Heart left ventricle (tissue), 16 donors: ENCODE measurements at regions of chr17 and their contacts with region 1.

Region 1: DNA sequence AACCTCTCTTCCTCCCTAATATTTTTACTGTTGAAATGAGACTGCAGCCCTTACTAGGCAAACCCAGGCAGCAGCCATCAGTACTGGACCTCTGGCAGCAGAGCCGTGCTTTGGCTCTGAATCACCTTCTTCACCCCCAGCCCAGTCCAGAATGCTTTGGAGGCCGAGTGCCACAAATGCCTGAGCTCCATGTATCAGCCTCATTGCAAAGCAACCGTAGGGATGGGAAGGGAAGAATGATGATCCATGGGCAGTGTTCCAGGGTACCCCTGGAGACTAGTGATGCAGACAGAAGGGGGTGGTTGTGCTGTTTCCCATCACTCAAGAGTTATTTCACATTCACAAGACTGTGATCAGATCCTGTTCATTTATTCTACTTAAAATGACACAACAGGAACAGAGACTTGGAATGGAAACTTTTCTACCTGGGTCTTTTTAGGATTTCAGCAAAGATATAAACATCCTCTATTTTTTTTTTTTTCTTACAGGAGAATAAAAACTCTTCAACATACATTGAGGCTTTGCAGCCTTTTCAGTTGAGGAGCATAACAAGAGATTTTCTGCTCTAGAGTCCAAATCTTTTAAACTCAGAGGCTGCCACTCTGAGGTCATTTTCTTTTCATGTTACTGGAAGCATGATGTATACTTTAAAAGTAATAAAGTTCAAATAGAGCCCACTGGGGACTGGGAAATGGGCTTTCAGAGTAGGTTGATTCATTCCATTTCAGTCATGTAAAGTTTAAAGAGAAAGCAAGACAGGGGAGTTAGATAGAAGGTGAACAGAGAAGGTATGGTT is 138.3 kb downstream of the KCNJ2 start:
- DNase-seq: peak; percentile 16 to 54 (median 50)
- ATAC-seq: peak; percentile 45 to 74 (median 59)
- H3K4me3 ChIP-seq: no peak overlapping the region
- H3K27ac ChIP-seq: peak overlapping the region in 2 of 12 donors; percentile 20 to 36
- H3K4me1 ChIP-seq: peaks cover 0 to 33% (median 5%) of the 10 kb centered on the region in 12 donors
- H3K27me3 ChIP-seq: no peaks in the 10 kb centered on the region
- CTCF ChIP-seq: no peak
- POLR2A ChIP-seq: no peak

Region 2: GRCh38 chr17:70168977-70169708 is 138.5 kb before region 1 on chr17 and contains the start of gene KCNJ2:
- intact Hi-C with region 1: loop called in 6 of 10 experiments (anchors 5 to 10 kb)
- DNase-seq: peak; percentile 92 to 94 (median 94)
- ATAC-seq: peak; percentile 83 to 97 (median 91)
- H3K4me3 ChIP-seq: peak within 1 kb of the TSS; percentile 62 to 87 (median 77)
- H3K27ac ChIP-seq: peak within 1 kb of the TSS; percentile 87 to 98 (median 94)
- H3K4me1 ChIP-seq: peaks cover 0 to 38% (median 4%) of the 10 kb centered on the region in 12 donors
- H3K27me3 ChIP-seq: no peaks in the 10 kb centered on the region
- CTCF ChIP-seq: peak in 1 of 12 donors; percentile 3
- POLR2A ChIP-seq: peak; percentile 61 to 99
- total RNA-seq, gene KCNJ2: 28.8 to 60.7 (median 48.8) TPM

Region 3: GRCh38 chr17:70375406-70375805 is 67.8 kb after region 1 on chr17:
- intact Hi-C with region 1: no loop called
- DNase-seq: no peak
- ATAC-seq: no peak
- H3K4me3 ChIP-seq: no peak overlapping the region
- H3K27ac ChIP-seq: no peak overlapping the region
- H3K4me1 ChIP-seq: no peaks in the 10 kb centered on the region
- H3K27me3 ChIP-seq: no peaks in the 10 kb centered on the region
- CTCF ChIP-seq: no peak
- POLR2A ChIP-seq: no peak

Region 4: GRCh38 chr17:70499067-70499786 is 191.6 kb after region 1 on chr17:
- intact Hi-C with region 1: no loop called
- DNase-seq: no peak
- ATAC-seq: peak in 2 of 4 donors; percentile 46 to 55
- H3K4me3 ChIP-seq: no peak overlapping the region
- H3K27ac ChIP-seq: peak overlapping the region in 3 of 12 donors; percentile 11 to 69 (median 35)
- H3K4me1 ChIP-seq: peaks cover 0 to 27% (median 2%) of the 10 kb centered on the region in 12 donors
- H3K27me3 ChIP-seq: no peaks in the 10 kb centered on the region
- CTCF ChIP-seq: no peak
- POLR2A ChIP-seq: no peak